Vagina (tissue), 2 donors: ENCODE measurements at regions of chr12 and their contacts with region 1.

Region 1: GRCh38 chr12:57865090-57865751 is 18.7 kb upstream of the CTDSP2 start:
- DNase-seq: no peak
- H3K4me3 ChIP-seq: peak overlapping the region; percentile 52 to 54
- H3K27ac ChIP-seq: peak overlapping the region; percentile 91
- H3K4me1 ChIP-seq: peaks cover 41% of the 10 kb centered on the region
- H3K27me3 ChIP-seq: no peaks in the 10 kb centered on the region
- CTCF ChIP-seq: no peak
- POLR2A ChIP-seq: peak in 1 of 2 donors; percentile 64

Region 2: DNA sequence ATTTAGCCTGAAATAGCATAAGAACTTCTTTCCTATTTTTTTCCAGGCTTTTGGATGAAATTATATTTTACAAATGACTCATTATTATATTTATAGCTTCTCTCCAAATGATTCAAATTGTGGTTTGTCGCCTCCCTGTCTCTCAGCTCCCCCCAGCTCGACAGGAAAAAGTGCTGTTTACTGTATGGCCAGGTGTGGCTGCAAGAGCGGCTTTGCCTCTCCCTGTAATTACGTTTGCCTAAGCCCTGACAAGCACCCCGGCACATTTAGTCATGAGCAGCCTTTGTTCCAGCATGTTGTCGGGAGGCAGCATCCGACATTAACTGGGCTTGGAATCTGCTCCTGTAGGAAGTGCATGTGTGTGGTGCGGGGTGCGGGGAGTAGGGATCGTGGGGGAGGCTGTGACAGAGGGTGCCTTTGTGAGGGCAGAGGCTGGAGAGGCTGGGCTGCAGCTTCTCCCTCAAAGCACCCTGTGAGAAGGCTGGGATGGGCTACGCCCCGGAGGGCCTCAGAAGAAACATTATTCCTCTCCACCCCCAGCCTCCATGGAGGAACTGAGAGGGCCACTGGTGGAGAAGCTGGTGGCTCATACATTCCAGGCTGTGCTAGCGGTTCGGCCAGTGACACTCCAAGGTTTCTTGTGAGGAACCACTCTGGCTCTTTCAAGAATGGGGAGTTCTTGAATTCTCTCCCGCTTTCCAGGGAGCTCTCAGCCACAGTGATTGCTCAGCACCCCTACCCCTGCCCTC is 23.4 kb after region 1 on chr12:
- intact Hi-C with region 1: loop called (anchors 2 kb)
- DNase-seq: no peak
- H3K4me3 ChIP-seq: peak overlapping the region; percentile 14
- H3K27ac ChIP-seq: peak overlapping the region; percentile 90
- H3K4me1 ChIP-seq: peaks cover 67% of the 10 kb centered on the region
- H3K27me3 ChIP-seq: no peaks in the 10 kb centered on the region
- CTCF ChIP-seq: no peak
- POLR2A ChIP-seq: no peak

Region 3: GRCh38 chr12:57899010-57899662 is 33.9 kb after region 1 on chr12:
- intact Hi-C with region 1: no loop called
- DNase-seq: no peak
- H3K4me3 ChIP-seq: no peak overlapping the region
- H3K27ac ChIP-seq: peak overlapping the region; percentile 97
- H3K4me1 ChIP-seq: peaks cover 57% of the 10 kb centered on the region
- H3K27me3 ChIP-seq: no peaks in the 10 kb centered on the region
- CTCF ChIP-seq: no peak
- POLR2A ChIP-seq: no peak